Naive thymus-derived CD4-positive, alpha-beta T cell (primary cell): ENCODE measurements at regions of chr3 and their contacts with region 1.

Region 1: DNA sequence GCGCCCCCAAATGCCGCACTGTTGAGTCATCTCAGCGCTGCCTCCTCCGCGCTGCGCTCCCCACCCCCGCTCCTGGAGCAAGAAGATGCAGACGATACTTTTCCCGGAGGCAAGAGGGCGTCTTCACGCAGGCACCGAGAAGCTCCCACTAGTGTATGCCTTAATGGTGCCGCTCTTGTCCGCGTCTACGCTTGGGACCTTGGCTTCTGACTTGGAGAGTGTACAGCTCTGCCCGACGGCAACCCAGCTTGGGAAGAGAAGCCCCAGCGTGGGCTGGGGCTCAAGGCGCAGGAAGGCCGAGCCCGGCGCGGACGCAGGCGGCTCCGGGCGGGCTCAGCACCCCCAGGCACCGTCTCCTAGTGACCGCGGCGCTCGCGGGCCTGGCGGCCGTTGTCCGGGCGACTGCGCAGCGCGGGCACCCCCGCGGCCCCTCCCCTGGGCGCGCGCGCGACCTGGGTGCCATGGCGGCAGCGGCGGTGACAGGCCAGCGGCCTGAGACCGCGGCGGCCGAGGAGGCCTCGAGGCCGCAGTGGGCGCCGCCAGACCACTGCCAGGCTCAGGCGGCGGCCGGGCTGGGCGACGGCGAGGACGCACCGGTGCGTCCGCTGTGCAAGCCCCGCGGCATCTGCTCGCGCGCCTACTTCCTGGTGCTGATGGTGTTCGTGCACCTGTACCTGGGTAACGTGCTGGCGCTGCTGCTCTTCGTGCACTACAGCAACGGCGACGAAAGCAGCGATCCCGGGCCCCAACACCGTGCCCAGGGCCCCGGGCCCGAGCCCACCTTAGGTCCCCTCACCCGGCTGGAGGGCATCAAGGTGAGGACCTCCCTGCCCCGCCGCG is at the start of gene P4HTM:
- DNase-seq: peak; percentile 36 to 83 (median 55)
- ATAC-seq: peak; percentile 68
- H3K4me3 ChIP-seq: peak within 1 kb of the TSS; percentile 96
- H3K4me3 Mint-ChIP-seq: peak within 1 kb of the TSS; percentile 89 to 97 (median 93)
- H3K27ac ChIP-seq: peak within 1 kb of the TSS; percentile 82
- H3K27ac Mint-ChIP-seq: peak within 1 kb of the TSS; percentile 87 to 95 (median 90)
- H3K4me1 ChIP-seq: peaks cover 24% of the 10 kb centered on the region in 2 donors
- H3K4me1 Mint-ChIP-seq: peaks cover 27 to 56% (median 42%) of the 10 kb centered on the region in 7 donors
- H3K27me3 ChIP-seq: no peaks in the 10 kb centered on the region
- H3K27me3 Mint-ChIP-seq: no peaks in the 10 kb centered on the region
- total RNA-seq, gene P4HTM: 37.9 to 74.7 (median 53.1) TPM

Region 2: GRCh38 chr3:49013755-49014628 is 24.0 kb after region 1 on chr3:
- CTCF ChIA-PET with region 1: interaction called, 12 read pairs
- POLR2A ChIA-PET with region 1: interaction called, 179 read pairs
- intact Hi-C with region 1: loop called in 1 of 2 experiments (anchors 1 kb)
- DNase-seq: peak in 3 of 9 donors; percentile 32 to 56 (median 41)
- ATAC-seq: peak; percentile 60
- H3K4me3 ChIP-seq: no peak overlapping the region
- H3K4me3 Mint-ChIP-seq: no peak overlapping the region
- H3K27ac ChIP-seq: no peak overlapping the region
- H3K27ac Mint-ChIP-seq: no peak overlapping the region
- H3K4me1 ChIP-seq: peaks cover 9 to 11% of the 10 kb centered on the region in 2 donors
- H3K4me1 Mint-ChIP-seq: peaks cover 5 to 33% (median 23%) of the 10 kb centered on the region in 7 donors
- H3K27me3 ChIP-seq: no peaks in the 10 kb centered on the region
- H3K27me3 Mint-ChIP-seq: no peaks in the 10 kb centered on the region

Region 3: DNA sequence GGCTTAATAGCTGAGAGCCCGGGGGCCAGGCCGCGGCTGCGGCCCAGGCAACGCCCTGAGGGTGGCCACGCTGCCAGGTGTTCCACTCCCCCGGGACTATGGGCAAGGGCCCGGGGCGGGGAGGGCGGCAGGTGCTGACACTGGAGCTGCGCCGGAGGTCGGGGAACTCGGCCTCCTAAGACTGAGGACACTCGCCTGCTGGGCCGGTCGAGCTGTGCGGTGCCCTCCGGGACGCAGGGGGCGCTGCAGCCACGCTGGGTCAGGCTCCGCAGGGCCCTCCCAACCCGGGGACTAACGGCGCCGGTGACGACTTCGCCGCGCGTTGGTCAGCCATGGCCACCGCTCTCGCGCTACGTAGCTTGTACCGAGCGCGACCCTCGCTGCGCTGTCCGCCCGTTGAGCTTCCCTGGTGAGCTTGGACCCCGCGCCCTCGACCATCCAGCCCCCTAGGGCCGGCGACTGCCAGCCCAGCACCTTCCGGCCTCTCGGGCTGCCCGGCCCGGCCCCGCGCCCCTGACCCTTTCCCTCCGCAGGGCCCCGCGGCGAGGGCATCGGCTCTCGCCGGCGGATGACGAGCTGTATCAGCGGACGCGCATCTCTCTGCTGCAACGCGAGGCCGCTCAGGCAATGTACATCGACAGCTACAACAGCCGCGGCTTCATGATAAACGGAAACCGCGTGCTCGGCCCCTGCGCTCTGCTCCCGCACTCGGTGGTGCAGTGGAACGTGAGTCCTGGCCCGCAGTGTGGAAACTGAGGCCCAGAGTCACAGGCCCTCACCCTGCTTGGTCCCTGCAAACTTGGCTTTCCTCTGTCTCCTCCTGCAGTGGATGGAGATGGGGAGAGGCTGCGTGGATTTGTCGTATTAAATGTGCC is 32.0 kb after region 1 on chr3 and contains the start of gene NDUFAF3:
- CTCF ChIA-PET with region 1: interaction called, 51 read pairs
- POLR2A ChIA-PET with region 1: interaction called, 179 read pairs
- intact Hi-C with region 1: loop called (anchors 1 to 2 kb)
- DNase-seq: peak; percentile 84 to 96 (median 89)
- ATAC-seq: peak; percentile 89
- H3K4me3 ChIP-seq: peak within 1 kb of the TSS; percentile 99
- H3K4me3 Mint-ChIP-seq: peak within 1 kb of the TSS; percentile 92 to 99 (median 97)
- H3K27ac ChIP-seq: peak within 1 kb of the TSS; percentile 98
- H3K27ac Mint-ChIP-seq: peak within 1 kb of the TSS; percentile 95 to 99 (median 98)
- H3K4me1 ChIP-seq: peaks cover 24 to 25% of the 10 kb centered on the region in 2 donors
- H3K4me1 Mint-ChIP-seq: peaks cover 21 to 61% (median 47%) of the 10 kb centered on the region in 7 donors
- H3K27me3 ChIP-seq: no peaks in the 10 kb centered on the region
- H3K27me3 Mint-ChIP-seq: peaks cover 0 to 2% (median 0%) of the 10 kb centered on the region in 5 donors
- total RNA-seq, gene NDUFAF3: 63.8 to 110 (median 89.3) TPM

Region 4: DNA sequence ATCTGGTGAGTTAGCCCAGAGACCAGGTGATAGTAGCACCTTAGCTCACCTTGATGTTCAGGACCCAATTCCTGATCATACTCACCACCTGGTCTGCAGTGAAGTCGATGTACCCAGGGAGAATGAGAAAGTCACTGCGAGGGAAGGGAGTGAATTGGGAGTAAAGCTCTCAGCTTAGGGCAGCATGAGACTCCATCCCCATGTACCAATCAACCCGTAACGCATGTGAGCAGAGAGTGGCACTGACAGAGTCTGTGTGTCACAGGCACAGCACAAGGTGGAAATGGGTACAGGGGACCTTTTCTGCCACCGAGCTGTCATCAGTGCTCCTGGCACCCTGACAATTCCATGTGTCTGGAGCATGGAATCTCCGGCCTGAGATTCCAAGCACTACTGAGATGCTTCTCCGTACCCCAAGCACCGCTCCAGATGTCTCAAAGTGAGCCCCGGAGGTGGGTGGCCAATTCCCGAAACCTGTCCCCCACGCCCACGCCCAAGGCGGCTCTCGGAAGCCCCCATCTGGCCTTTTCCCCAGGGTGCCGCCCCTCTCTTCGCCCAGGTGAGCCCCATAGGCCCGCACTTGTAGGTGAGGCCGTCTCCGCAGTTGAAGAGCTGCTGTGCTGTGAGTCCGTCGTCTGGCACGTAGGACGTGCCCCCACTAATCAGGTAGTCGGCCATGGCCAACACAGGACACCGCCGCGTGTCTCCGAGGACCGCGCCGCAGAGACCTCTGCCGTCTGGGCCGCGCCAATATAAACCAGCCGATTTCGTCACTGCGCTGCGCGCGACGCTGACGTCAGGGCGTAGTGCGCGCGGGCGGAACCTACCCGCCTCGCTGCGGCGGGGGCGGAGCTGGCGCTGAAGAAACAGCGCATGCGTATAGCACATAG is 38.9 kb after region 1 on chr3 and contains the start of gene IMPDH2:
- CTCF ChIA-PET with region 1: interaction called, 51 read pairs
- POLR2A ChIA-PET with region 1: interaction called, 179 read pairs
- intact Hi-C with region 1: loop called in 1 of 2 experiments (anchors 1 kb)
- DNase-seq: peak; percentile 89 to 95 (median 93)
- ATAC-seq: peak; percentile 97
- H3K4me3 ChIP-seq: peak within 1 kb of the TSS; percentile 74
- H3K4me3 Mint-ChIP-seq: peak within 1 kb of the TSS; percentile 86 to 96 (median 94)
- H3K27ac ChIP-seq: peak within 1 kb of the TSS; percentile 98
- H3K27ac Mint-ChIP-seq: peak within 1 kb of the TSS; percentile 92 to 100 (median 98)
- H3K4me1 ChIP-seq: peaks cover 10 to 11% of the 10 kb centered on the region in 2 donors
- H3K4me1 Mint-ChIP-seq: peaks cover 7 to 52% (median 34%) of the 10 kb centered on the region in 7 donors
- H3K27me3 ChIP-seq: no peaks in the 10 kb centered on the region
- H3K27me3 Mint-ChIP-seq: no peaks in the 10 kb centered on the region
- total RNA-seq, gene IMPDH2: 102 to 206 (median 121) TPM

Region 5: GRCh38 chr3:49158108-49158709 is 168.2 kb after region 1 on chr3:
- CTCF ChIA-PET with region 1: interaction called, 64 read pairs
- POLR2A ChIA-PET with region 1: interaction called, 9 read pairs
- intact Hi-C with region 1: loop called (anchors 1 kb)
- DNase-seq: peak in 8 of 9 donors; percentile 40 to 68 (median 59)
- ATAC-seq: peak; percentile 89
- H3K4me3 ChIP-seq: no peak overlapping the region
- H3K4me3 Mint-ChIP-seq: no peak overlapping the region
- H3K27ac ChIP-seq: peak overlapping the region; percentile 20
- H3K27ac Mint-ChIP-seq: peak overlapping the region in 6 of 9 donors; percentile 3 to 82 (median 18)
- H3K4me1 ChIP-seq: no peaks in the 10 kb centered on the region
- H3K4me1 Mint-ChIP-seq: peaks cover 0 to 10% (median 5%) of the 10 kb centered on the region in 7 donors
- H3K27me3 ChIP-seq: no peaks in the 10 kb centered on the region
- H3K27me3 Mint-ChIP-seq: no peaks in the 10 kb centered on the region

Region 6: DNA sequence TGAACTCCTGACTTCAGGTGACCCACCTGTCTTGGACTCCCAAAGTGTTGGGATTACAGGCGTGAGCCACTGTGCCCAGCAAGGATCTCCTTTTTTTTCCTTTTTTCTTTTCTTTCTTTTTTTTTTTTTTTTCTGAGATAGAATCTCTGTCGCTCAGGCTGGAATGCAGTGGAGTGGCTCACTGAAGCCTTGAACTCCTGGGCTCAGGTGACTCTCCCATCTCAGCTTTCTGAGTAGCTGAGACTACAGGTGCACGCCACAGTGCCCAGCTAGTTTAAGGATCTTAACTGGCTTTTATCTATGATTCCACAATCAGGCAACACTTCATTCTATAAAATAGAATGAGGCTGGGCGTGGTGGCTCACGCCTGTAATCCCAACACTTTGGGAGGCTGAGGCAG is 455.4 kb after region 1 on chr3:
- CTCF ChIA-PET with region 1: interaction called, 8 read pairs
- POLR2A ChIA-PET with region 1: no interaction called
- intact Hi-C with region 1: loop called (anchors 1 to 5 kb)
- DNase-seq: no peak
- ATAC-seq: no peak
- H3K4me3 ChIP-seq: no peak overlapping the region
- H3K4me3 Mint-ChIP-seq: no peak overlapping the region
- H3K27ac ChIP-seq: no peak overlapping the region
- H3K27ac Mint-ChIP-seq: peak overlapping the region in 3 of 9 donors; percentile 45 to 92 (median 60)
- H3K4me1 ChIP-seq: peaks cover 10 to 15% of the 10 kb centered on the region in 2 donors
- H3K4me1 Mint-ChIP-seq: peaks cover 5 to 25% (median 18%) of the 10 kb centered on the region in 7 donors
- H3K27me3 ChIP-seq: no peaks in the 10 kb centered on the region
- H3K27me3 Mint-ChIP-seq: no peaks in the 10 kb centered on the region

Region 7: DNA sequence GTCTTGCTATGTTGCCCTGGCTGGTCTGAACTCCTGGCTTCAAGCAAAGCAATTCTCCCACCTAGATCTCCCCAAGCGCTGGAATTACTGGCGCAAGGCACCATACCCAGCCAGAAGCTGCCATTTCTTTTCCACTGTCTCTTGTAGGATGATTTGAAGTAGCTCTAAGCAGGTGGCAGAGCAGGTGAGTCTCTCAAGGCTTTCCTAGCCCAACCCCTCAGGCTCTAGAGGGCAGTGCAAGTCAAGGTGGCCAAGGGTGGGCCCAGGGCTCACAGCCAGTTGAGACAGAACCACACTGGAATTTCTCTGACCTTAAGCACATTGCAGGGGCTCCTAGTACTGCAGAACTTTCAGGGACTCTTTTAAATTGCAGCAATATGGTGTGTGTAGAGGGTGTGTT is 464.4 kb after region 1 on chr3:
- CTCF ChIA-PET with region 1: interaction called, 8 read pairs
- POLR2A ChIA-PET with region 1: no interaction called
- intact Hi-C with region 1: loop called (anchors 1 to 5 kb)
- DNase-seq: no peak
- ATAC-seq: no peak
- H3K4me3 ChIP-seq: no peak overlapping the region
- H3K4me3 Mint-ChIP-seq: no peak overlapping the region
- H3K27ac ChIP-seq: no peak overlapping the region
- H3K27ac Mint-ChIP-seq: peak overlapping the region in 1 of 9 donors; percentile 63
- H3K4me1 ChIP-seq: no peaks in the 10 kb centered on the region
- H3K4me1 Mint-ChIP-seq: no peaks in the 10 kb centered on the region
- H3K27me3 ChIP-seq: no peaks in the 10 kb centered on the region
- H3K27me3 Mint-ChIP-seq: no peaks in the 10 kb centered on the region

Region 8: DNA sequence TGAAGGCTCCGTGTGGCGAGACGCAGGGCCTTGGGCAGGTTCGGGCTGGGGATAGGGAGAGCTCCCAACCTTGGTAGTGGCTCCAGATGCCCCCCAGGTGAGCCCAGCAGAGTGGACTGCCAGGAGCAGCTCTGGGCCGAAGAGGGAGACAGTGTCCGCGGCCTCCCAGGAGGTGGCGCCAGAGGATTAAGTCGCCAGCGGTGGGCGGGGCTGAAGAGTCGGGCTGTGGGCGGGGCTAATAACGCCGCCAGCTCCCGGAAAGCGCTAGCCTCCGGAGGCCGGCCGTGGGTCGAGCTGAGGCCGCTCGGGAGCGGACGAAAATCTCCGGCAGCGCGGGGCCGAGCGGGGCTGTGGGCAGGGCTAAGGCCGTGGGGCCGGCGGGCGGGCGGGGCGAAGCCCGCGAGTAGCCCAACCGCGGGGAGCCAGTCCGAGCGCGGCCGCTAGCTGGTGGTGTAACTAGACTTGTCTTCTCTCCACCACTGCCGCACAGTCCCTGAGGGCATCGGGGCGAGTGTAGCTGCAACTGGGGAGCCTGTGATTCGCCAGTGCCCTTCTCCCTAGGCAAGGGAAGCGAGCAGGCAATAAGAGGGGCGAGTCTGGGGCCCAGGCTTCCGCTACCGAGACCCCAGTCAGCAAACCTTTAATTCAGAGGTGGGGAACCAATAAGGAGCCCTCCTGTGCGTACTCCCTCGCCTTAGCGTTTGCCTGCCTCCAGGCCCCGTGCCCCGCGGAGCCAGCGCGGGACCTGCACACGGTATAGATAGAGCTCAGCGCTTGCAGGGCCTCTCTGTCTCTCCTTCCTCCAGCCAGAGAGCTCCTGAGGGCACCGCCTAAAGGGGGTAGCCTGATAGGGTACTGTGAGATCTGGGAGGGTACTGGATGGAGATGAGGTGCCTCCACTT is 549.9 kb after region 1 on chr3:
- CTCF ChIA-PET with region 1: no interaction called
- POLR2A ChIA-PET with region 1: no interaction called
- intact Hi-C with region 1: no loop called
- DNase-seq: peak; percentile 77 to 97 (median 85)
- ATAC-seq: peak; percentile 99
- H3K4me3 ChIP-seq: peak overlapping the region; percentile 90
- H3K4me3 Mint-ChIP-seq: peak overlapping the region; percentile 75 to 84 (median 80)
- H3K27ac ChIP-seq: peak overlapping the region; percentile 78
- H3K27ac Mint-ChIP-seq: peak overlapping the region in 6 of 9 donors; percentile 14 to 69 (median 33)
- H3K4me1 ChIP-seq: peaks cover 4 to 5% of the 10 kb centered on the region in 2 donors
- H3K4me1 Mint-ChIP-seq: peaks cover 0 to 9% (median 5%) of the 10 kb centered on the region in 7 donors
- H3K27me3 ChIP-seq: no peaks in the 10 kb centered on the region
- H3K27me3 Mint-ChIP-seq: peaks cover 0 to 24% (median 4%) of the 10 kb centered on the region in 5 donors